CD4-positive, alpha-beta memory T cell (primary cell): ENCODE measurements at regions of chr3 and their contacts with region 1.

Region 1: DNA sequence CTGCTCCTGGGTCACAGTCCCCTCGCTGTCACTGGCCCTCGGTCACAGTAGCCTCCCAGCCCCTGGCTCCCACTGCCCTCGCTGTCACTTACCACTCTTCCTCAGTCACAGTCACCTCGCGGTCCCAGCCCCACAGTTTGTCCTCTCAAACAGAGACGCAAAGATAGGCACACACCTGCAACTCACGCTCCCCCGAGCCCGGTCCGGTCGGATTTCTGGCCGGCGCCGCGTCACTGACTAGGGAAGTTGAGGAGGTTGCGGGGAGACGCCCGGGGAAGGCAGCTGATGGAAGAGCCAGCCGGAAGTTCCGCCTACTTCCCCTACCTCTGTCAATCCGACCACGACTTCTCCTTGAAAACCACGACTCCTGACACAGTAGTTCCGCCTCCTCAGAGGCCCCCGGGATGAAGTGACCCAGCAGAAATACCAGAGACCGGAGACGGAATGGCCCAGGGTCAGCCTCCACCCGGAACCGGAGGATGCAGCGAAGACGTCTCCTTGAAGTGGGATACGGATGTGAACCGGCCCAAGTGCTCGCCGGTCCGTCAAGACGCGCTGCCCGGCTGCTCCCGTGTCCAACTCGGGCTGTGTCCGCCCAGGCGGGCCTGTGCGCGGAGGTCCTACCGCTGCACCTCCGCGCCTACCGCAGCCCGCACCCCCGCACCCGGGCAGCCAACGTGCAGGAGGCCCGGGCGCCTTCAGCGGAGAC is at the start of gene PCYT1A:
- DNase-seq: peak; percentile 66 to 80 (median 73)
- H3K4me3 ChIP-seq: peak within 1 kb of the TSS; percentile 87 to 89
- H3K4me3 Mint-ChIP-seq: peak within 1 kb of the TSS; percentile 95 to 100 (median 99)
- H3K27ac ChIP-seq: peak within 1 kb of the TSS; percentile 92
- H3K27ac Mint-ChIP-seq: peak within 1 kb of the TSS; percentile 91 to 100 (median 98)
- H3K4me1 ChIP-seq: peaks cover 45% of the 10 kb centered on the region
- H3K4me1 Mint-ChIP-seq: peaks cover 29 to 52% (median 46%) of the 10 kb centered on the region in 4 donors
- H3K27me3 ChIP-seq: no peaks in the 10 kb centered on the region
- H3K27me3 Mint-ChIP-seq: no peaks in the 10 kb centered on the region
- total RNA-seq, gene PCYT1A: 70.1 to 73.7 TPM

Region 2: GRCh38 chr3:196274585-196274984 is 13.0 kb before region 1 on chr3:
- CTCF ChIA-PET with region 1: interaction called, 6 read pairs
- POLR2A ChIA-PET with region 1: interaction called, 5 read pairs
- intact Hi-C with region 1: loop called (anchors 1 kb)
- DNase-seq: peak; percentile 71 to 86 (median 79)
- H3K4me3 ChIP-seq: peak overlapping the region; percentile 21 to 52
- H3K4me3 Mint-ChIP-seq: peak overlapping the region; percentile 76 to 89 (median 82)
- H3K27ac ChIP-seq: peak overlapping the region; percentile 75
- H3K27ac Mint-ChIP-seq: peak overlapping the region; percentile 89 to 99 (median 97)
- H3K4me1 ChIP-seq: peaks cover 46% of the 10 kb centered on the region
- H3K4me1 Mint-ChIP-seq: peaks cover 29 to 63% (median 38%) of the 10 kb centered on the region in 4 donors
- H3K27me3 ChIP-seq: no peaks in the 10 kb centered on the region
- H3K27me3 Mint-ChIP-seq: no peaks in the 10 kb centered on the region